Activated CD8-positive, alpha-beta T cell treated with anti-CD3 and anti-CD28 coated beads for 36 hours (primary cell): ENCODE measurements at regions of chr6 and their contacts with region 1.

Region 1: GRCh38 chr6:32868257-32868788 is 14.3 kb downstream of the PSMB9 start:
- DNase-seq: peak; percentile 95
- ATAC-seq: peak; percentile 78
- H3K4me3 Mint-ChIP-seq: no peak overlapping the region
- H3K27ac Mint-ChIP-seq: no peak overlapping the region
- H3K4me1 Mint-ChIP-seq: peaks cover 32% of the 10 kb centered on the region
- H3K27me3 Mint-ChIP-seq: no peaks in the 10 kb centered on the region
- CTCF ChIP-seq: peak; percentile 92

Region 2: DNA sequence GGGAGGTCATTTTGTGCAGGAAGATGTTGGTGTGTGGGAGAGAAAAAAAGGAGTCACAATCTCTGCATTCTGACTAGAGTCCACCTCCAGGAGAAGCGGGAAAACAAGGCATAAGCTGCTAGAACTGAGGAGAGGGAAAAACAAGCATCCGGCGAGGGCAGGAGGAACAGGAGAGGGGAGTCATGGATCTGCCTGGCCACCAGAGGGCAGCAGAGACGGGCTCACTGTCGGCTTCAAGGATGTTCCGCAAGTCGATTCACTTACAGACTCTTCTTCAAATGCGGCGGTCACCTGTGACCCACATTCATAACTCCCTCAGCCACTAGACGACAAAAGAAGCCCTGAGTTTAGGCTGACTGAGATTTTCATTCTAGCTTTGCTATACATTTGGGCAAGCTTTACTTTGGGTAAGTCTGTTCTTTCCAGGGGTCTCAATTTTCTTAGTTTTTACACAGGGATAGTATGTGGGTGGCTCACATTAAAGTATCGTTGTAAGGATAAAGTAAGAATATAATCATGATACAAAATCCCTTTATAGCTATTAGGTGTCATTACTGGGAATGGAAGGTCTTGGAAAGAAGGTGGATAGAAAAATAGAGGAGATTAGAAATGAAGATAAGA is 454.8 kb before region 1 on chr6:
- CTCF ChIA-PET with region 1: interaction called, 30 read pairs
- POLR2A ChIA-PET with region 1: no interaction called
- intact Hi-C with region 1: no loop called
- DNase-seq: peak; percentile 86
- ATAC-seq: peak; percentile 86
- H3K4me3 Mint-ChIP-seq: no peak overlapping the region
- H3K27ac Mint-ChIP-seq: no peak overlapping the region
- H3K4me1 Mint-ChIP-seq: no peaks in the 10 kb centered on the region
- H3K27me3 Mint-ChIP-seq: peaks cover 42% of the 10 kb centered on the region
- CTCF ChIP-seq: peak; percentile 90

Region 3: DNA sequence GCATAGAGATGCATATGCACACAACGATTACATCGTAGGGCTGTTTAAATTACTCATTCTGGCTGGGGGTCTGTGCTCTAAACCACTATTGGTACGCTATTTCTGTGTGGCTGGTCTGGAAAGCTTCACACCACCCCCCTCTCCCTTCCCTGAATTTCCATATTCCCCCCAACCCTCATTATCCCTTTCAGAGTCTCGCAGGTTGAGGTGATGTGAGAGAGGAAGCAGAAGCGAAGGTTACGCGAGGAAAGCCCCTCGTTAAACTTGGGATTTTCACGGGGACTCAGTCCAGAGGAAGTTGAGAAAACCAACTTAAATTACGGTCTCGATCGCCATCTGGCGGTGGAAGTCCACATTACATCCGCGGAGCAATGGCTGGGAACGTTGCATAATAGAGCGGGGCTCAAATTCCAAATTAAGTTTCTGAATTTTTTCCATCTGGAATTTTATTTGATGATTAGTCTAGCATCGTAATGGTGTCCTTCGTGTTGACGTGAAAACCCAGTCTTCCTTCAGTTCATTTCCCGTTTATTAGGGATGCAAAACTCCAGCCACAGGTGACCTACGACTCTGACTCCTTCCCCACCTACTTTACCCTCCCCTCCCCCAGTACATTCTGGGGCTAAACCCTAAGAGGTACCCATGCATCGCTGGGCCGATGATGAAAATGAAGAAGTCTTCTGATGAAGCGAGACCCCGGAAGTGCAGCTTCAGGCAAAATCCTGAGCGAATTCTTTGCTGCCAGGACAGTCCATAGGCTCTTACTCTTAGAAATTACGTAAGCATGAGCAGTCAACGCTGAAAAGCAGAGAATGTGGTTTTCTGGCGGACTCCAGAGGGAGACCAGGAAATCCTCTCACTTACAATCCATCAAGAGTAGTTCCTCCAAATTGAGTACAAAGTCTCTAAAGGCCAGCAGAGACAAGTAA is 71.2 kb before region 1 on chr6:
- CTCF ChIA-PET with region 1: interaction called, 32 read pairs
- POLR2A ChIA-PET with region 1: interaction called, 3 read pairs
- intact Hi-C with region 1: no loop called
- DNase-seq: peak; percentile 90
- ATAC-seq: peak; percentile 87
- H3K4me3 Mint-ChIP-seq: peak overlapping the region; percentile 64
- H3K27ac Mint-ChIP-seq: no peak overlapping the region
- H3K4me1 Mint-ChIP-seq: peaks cover 23% of the 10 kb centered on the region
- H3K27me3 Mint-ChIP-seq: peaks cover 41% of the 10 kb centered on the region
- CTCF ChIP-seq: peak; percentile 90

Region 4: GRCh38 chr6:32838114-32838958 is 30.0 kb before region 1 on chr6 and contains the start of gene TAP2:
- CTCF ChIA-PET with region 1: interaction called, 400 read pairs
- POLR2A ChIA-PET with region 1: interaction called, 79 read pairs
- intact Hi-C with region 1: loop called (anchors 1 kb)
- DNase-seq: peak; percentile 98
- ATAC-seq: peak; percentile 82
- H3K4me3 Mint-ChIP-seq: peak within 1 kb of the TSS; percentile 79
- H3K27ac Mint-ChIP-seq: peak within 1 kb of the TSS; percentile 99
- H3K4me1 Mint-ChIP-seq: peaks cover 74% of the 10 kb centered on the region
- H3K27me3 Mint-ChIP-seq: no peaks in the 10 kb centered on the region
- CTCF ChIP-seq: peak; percentile 95
- total RNA-seq, gene TAP2: 110 to 113 TPM

Region 5: GRCh38 chr6:32885698-32886286 is 17.5 kb after region 1 on chr6:
- CTCF ChIA-PET with region 1: interaction called, 50 read pairs
- POLR2A ChIA-PET with region 1: interaction called, 3 read pairs
- intact Hi-C with region 1: no loop called
- DNase-seq: no peak
- ATAC-seq: peak; percentile 70
- H3K4me3 Mint-ChIP-seq: no peak overlapping the region
- H3K27ac Mint-ChIP-seq: no peak overlapping the region
- H3K4me1 Mint-ChIP-seq: peaks cover 6% of the 10 kb centered on the region
- H3K27me3 Mint-ChIP-seq: no peaks in the 10 kb centered on the region
- CTCF ChIP-seq: peak; percentile 74

Region 6: GRCh38 chr6:32971581-32972352 is 103.4 kb after region 1 on chr6:
- CTCF ChIA-PET with region 1: interaction called, 10 read pairs
- POLR2A ChIA-PET with region 1: interaction called, 17 read pairs
- intact Hi-C with region 1: no loop called
- DNase-seq: peak; percentile 100
- ATAC-seq: peak; percentile 38
- H3K4me3 Mint-ChIP-seq: peak overlapping the region; percentile 95
- H3K27ac Mint-ChIP-seq: peak overlapping the region; percentile 99
- H3K4me1 Mint-ChIP-seq: peaks cover 23% of the 10 kb centered on the region
- H3K27me3 Mint-ChIP-seq: no peaks in the 10 kb centered on the region
- CTCF ChIP-seq: no peak